Mammary epithelial cell (primary cell): ENCODE measurements at regions of chr13 and their contacts with region 1.

Region 1: DNA sequence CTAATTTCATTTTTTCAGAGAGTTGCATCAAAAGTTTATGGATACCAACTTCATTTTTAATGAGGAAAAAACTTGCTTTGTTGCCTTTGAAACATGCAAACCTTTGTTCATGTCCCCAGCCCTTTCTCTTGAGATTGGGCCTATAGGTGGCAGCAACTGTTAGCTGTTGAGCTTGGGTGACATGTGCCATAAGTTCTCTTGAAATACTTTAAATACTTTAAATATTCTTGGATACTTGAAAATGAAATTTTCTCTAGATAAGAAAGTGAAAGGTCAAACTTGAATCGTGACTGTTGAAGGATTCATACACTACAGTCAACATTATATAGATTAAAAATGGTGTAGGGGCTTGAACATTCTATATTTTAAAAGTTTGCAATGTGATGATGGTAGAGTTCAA is 294.9 kb downstream of the NDFIP2 start:
- DNase-seq: peak; percentile 46
- H3K4me3 ChIP-seq: no peak overlapping the region
- H3K27ac ChIP-seq: no peak overlapping the region
- H3K4me1 ChIP-seq: peaks cover 29% of the 10 kb centered on the region
- H3K27me3 ChIP-seq: no peaks in the 10 kb centered on the region
- CTCF ChIP-seq: peak; percentile 53 to 76

Region 2: GRCh38 chr13:79548902-79549301 is 226.9 kb before region 1 on chr13:
- CTCF ChIA-PET with region 1: no interaction called
- dilution Hi-C with region 1: no loop called
- in situ Hi-C with region 1: no loop called
- intact Hi-C with region 1: loop called (anchors 5 kb)
- DNase-seq: peak; percentile 23
- H3K4me3 ChIP-seq: no peak overlapping the region
- H3K27ac ChIP-seq: peak overlapping the region; percentile 3
- H3K4me1 ChIP-seq: peaks cover 5% of the 10 kb centered on the region
- H3K27me3 ChIP-seq: no peaks in the 10 kb centered on the region
- CTCF ChIP-seq: peak; percentile 48 to 55

Region 3: DNA sequence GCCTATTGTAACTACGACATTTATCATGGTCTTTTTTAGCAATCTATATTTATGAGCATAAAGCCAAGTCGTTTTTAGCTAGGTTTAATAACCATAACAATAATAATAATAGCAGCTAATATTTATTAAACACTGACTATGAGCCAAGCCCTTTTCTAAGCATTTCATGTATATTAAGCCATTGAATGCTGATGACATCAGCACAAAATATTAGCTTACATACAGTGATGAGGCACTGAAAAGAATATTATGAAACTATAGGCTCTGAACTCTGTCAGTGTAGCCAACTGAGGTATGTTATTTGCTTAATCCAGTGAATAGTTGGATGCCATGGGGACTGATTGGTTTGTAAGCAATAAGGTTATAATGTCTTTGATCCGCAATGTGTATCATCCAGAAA is 59.6 kb before region 1 on chr13:
- CTCF ChIA-PET with region 1: no interaction called
- dilution Hi-C with region 1: no loop called
- in situ Hi-C with region 1: no loop called
- intact Hi-C with region 1: no loop called
- DNase-seq: no peak
- H3K4me3 ChIP-seq: no peak overlapping the region
- H3K27ac ChIP-seq: no peak overlapping the region
- H3K4me1 ChIP-seq: peaks cover 1% of the 10 kb centered on the region
- H3K27me3 ChIP-seq: no peaks in the 10 kb centered on the region
- CTCF ChIP-seq: no peak

Region 4: GRCh38 chr13:79847882-79848592 is 72.2 kb after region 1 on chr13:
- CTCF ChIA-PET with region 1: no interaction called
- dilution Hi-C with region 1: no loop called
- in situ Hi-C with region 1: no loop called
- intact Hi-C with region 1: no loop called
- DNase-seq: no peak
- H3K4me3 ChIP-seq: no peak overlapping the region
- H3K27ac ChIP-seq: no peak overlapping the region
- H3K4me1 ChIP-seq: no peaks in the 10 kb centered on the region
- H3K27me3 ChIP-seq: no peaks in the 10 kb centered on the region
- CTCF ChIP-seq: no peak

Region 5: GRCh38 chr13:79988573-79988972 is 212.7 kb after region 1 on chr13:
- CTCF ChIA-PET with region 1: no interaction called
- dilution Hi-C with region 1: no loop called
- in situ Hi-C with region 1: no loop called
- intact Hi-C with region 1: loop called (anchors 5 kb)
- DNase-seq: peak; percentile 74
- H3K4me3 ChIP-seq: no peak overlapping the region
- H3K27ac ChIP-seq: peak overlapping the region; percentile 99
- H3K4me1 ChIP-seq: peaks cover 49% of the 10 kb centered on the region
- H3K27me3 ChIP-seq: no peaks in the 10 kb centered on the region
- CTCF ChIP-seq: no peak

Region 6: GRCh38 chr13:80030491-80030890 is 254.7 kb after region 1 on chr13:
- CTCF ChIA-PET with region 1: no interaction called
- dilution Hi-C with region 1: no loop called
- in situ Hi-C with region 1: no loop called
- intact Hi-C with region 1: loop called (anchors 5 kb)
- DNase-seq: peak; percentile 65
- H3K4me3 ChIP-seq: no peak overlapping the region
- H3K27ac ChIP-seq: no peak overlapping the region
- H3K4me1 ChIP-seq: peaks cover 7% of the 10 kb centered on the region
- H3K27me3 ChIP-seq: no peaks in the 10 kb centered on the region
- CTCF ChIP-seq: peak; percentile 47 to 50

Region 7: GRCh38 chr13:80363890-80364503 is 588.2 kb after region 1 on chr13:
- CTCF ChIA-PET with region 1: no interaction called
- dilution Hi-C with region 1: no loop called
- in situ Hi-C with region 1: no loop called
- intact Hi-C with region 1: loop called (anchors 1 kb)
- DNase-seq: peak; percentile 5
- H3K4me3 ChIP-seq: peak overlapping the region in 1 of 3 experiments; percentile 41
- H3K27ac ChIP-seq: peak overlapping the region; percentile 27
- H3K4me1 ChIP-seq: peaks cover 10% of the 10 kb centered on the region
- H3K27me3 ChIP-seq: no peaks in the 10 kb centered on the region
- CTCF ChIP-seq: peak; percentile 69 to 81

Region 8: DNA sequence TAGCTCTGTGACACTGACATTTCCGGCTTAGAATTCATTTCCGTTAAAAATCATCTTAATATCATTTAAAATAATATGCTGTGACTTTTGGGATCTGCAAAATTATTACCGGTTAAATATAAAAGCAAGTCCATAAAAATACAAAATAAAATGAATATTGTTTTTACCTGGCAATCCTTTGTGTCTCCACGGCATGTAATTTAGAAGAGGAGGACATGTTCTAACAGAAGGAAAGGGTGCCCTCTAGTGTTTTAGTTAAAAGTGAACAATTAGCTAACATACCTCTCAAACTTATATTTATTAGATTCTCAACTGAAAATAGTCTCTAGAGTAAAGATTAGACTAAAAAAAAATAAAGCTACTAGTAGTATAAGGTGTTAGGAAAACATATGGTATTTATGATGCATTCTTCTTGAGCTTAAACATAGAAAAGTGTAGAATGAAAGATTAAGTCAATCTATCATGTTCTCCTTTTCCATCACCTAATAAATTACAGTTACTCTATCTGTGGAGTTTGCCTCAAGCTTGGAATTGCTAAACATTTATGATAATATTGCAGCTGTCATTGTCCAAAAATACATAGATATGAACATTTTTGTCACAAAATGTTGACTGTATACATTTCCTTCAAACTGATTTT is 1241.8 kb after region 1 on chr13:
- CTCF ChIA-PET with region 1: no interaction called
- dilution Hi-C with region 1: no loop called
- in situ Hi-C with region 1: no loop called
- intact Hi-C with region 1: loop called (anchors 5 kb)
- DNase-seq: peak; percentile 12
- H3K4me3 ChIP-seq: no peak overlapping the region
- H3K27ac ChIP-seq: no peak overlapping the region
- H3K4me1 ChIP-seq: peaks cover 7% of the 10 kb centered on the region
- H3K27me3 ChIP-seq: no peaks in the 10 kb centered on the region
- CTCF ChIP-seq: peak; percentile 41 to 59